Activated CD4-positive, alpha-beta T cell treated with anti-CD3 and anti-CD28 coated beads, Interleukin-2, amount 10 ng/mL, durations not matched to agents 7 days and 5 days (primary cell): ENCODE measurements at regions of chr12 and their contacts with region 1.

Region 1: GRCh38 chr12:6140651-6141447 is 16.4 kb upstream of the VWF start:
- DNase-seq: peak; percentile 33
- H3K4me3 Mint-ChIP-seq: no peak overlapping the region
- H3K27ac Mint-ChIP-seq: peak overlapping the region; percentile 94
- H3K4me1 Mint-ChIP-seq: peaks cover 44% of the 10 kb centered on the region
- H3K27me3 Mint-ChIP-seq: no peaks in the 10 kb centered on the region

Region 2: DNA sequence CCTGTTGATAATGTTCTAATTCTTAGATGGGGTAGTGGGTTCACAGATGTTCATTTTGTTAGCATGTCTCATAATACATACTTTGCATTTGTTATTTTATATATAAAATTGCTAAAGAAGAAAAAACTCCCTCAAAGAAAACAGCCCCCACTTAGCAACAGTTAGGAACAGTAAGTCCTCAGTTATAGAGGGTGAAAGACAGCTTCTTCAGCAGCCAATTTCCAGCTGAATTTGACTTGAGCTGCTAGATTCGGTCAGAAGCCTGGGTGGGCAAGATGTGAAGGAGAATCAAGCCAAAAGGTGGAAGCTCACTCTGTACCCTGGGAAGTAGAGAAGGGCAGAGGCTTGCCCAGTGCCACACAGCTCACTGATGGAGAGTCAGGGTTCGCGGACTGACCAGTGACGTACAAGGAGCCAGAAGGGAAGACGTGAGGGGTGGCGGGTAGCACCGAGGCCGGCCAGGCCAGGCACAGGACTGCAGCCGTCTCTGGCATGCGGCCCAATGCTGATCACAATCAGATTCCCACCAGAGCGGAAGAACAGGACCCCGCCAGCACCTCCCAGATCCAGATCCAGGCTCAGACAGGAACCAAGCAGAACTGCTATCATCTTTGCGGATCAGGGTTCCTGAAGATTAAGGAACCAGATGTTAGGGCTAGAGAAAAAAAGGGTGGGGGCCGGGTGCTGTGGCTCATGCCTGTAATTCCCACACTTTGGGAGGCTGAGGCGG is 14.0 kb after region 1 on chr12:
- CTCF ChIA-PET with region 1: interaction called, 11 read pairs
- POLR2A ChIA-PET with region 1: no interaction called
- DNase-seq: no peak
- H3K4me3 Mint-ChIP-seq: no peak overlapping the region
- H3K27ac Mint-ChIP-seq: no peak overlapping the region
- H3K4me1 Mint-ChIP-seq: no peaks in the 10 kb centered on the region
- H3K27me3 Mint-ChIP-seq: peaks cover 2% of the 10 kb centered on the region

Region 3: GRCh38 chr12:6312529-6313325 is 171.9 kb after region 1 on chr12:
- CTCF ChIA-PET with region 1: no interaction called
- POLR2A ChIA-PET with region 1: no interaction called
- DNase-seq: no peak
- H3K4me3 Mint-ChIP-seq: no peak overlapping the region
- H3K27ac Mint-ChIP-seq: no peak overlapping the region
- H3K4me1 Mint-ChIP-seq: peaks cover 2% of the 10 kb centered on the region
- H3K27me3 Mint-ChIP-seq: peaks cover 23% of the 10 kb centered on the region